ENCODE measurements at regions of chr14 and their contacts with region 1.

Region 1: GRCh38 chr14:95527387-95528002 is 7.4 kb upstream of the GLRX5 start:
- DNase-seq: no peak
- H3K4me3 Mint-ChIP-seq: no peak overlapping the region
- H3K27ac Mint-ChIP-seq: peak overlapping the region; percentile 84
- H3K4me1 Mint-ChIP-seq: peaks cover 74% of the 10 kb centered on the region
- H3K27me3 Mint-ChIP-seq: no peaks in the 10 kb centered on the region

Region 2: DNA sequence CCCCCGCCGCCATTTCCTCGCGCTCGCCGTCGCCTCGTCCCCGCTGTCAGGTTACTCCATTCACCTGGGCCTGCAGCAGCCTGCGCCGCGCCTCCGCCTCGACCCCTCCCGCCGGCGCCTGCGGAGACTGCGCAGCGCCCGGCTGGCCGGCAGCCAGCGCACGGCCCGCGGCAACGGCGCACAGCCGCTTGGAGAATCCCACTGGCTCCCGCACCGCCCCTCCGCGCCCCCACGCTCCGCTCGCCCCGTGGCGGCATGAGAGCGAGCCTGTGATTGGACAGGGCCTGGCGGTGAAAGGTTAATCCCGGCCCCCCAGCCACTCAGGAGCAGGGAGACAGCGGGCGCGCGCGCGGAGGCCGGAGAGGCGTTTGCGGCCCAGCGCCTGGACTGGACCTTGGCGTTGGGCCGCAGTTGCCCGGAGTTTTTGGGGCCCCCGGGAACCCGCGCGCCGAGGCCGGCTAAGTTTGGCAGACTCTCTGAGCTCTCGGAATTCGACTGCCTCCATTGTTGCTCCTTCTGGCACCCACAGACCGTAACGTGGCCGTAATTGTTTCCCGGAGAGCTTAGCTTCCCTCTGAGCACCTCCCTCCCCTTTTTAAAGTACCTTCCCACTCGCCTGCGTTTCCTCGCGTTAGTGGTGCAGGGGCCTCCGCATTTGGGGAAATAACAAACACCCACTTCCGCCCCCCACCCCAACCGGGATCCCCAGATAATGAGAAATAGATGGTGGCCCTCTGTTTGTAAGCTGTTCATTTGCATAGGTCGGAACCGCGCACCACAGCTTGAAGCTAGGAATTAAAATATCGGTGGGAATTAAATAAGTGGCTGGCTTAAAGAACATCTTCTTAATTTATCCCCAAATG is 369.9 kb before region 1 on chr14 and contains the start of gene DICER1:
- intact Hi-C with region 1: loop called (anchors 2 kb)
- DNase-seq: peak; percentile 90
- H3K4me3 Mint-ChIP-seq: peak within 1 kb of the TSS; percentile 91
- H3K27ac Mint-ChIP-seq: peak within 1 kb of the TSS; percentile 97
- H3K4me1 Mint-ChIP-seq: peaks cover 31% of the 10 kb centered on the region
- H3K27me3 Mint-ChIP-seq: no peaks in the 10 kb centered on the region
- total RNA-seq, gene DICER1: 64.0 and 67.1 TPM in 2 replicates

Region 3: DNA sequence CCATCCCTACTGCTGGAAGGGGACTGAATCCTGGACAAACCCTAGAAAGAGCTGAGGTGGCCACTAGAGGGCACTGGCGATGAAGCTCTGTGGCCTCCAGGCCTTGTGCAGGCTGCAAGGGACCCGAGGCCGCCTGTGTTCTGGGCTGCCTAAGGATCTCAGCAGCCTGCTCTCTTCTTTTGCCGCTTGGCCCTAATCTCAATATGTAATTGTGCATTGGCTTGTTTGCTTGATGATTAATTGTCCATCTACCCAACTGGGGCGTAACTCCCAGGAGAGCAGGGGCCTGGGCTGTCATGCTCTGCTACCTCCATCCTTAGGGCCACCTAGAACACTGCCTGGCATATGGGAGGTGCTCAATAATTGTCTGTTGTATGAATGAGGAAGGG is 84.9 kb before region 1 on chr14:
- intact Hi-C with region 1: loop called (anchors 1 kb)
- DNase-seq: peak; percentile 57
- H3K4me3 Mint-ChIP-seq: no peak overlapping the region
- H3K27ac Mint-ChIP-seq: peak overlapping the region; percentile 19
- H3K4me1 Mint-ChIP-seq: peaks cover 3% of the 10 kb centered on the region
- H3K27me3 Mint-ChIP-seq: no peaks in the 10 kb centered on the region

Region 4: GRCh38 chr14:95495538-95496025 is 31.9 kb before region 1 on chr14:
- intact Hi-C with region 1: loop called (anchors 1 kb)
- DNase-seq: no peak
- H3K4me3 Mint-ChIP-seq: peak overlapping the region; percentile 13
- H3K27ac Mint-ChIP-seq: peak overlapping the region; percentile 81
- H3K4me1 Mint-ChIP-seq: peaks cover 57% of the 10 kb centered on the region
- H3K27me3 Mint-ChIP-seq: no peaks in the 10 kb centered on the region

Region 5: GRCh38 chr14:95515596-95516552 is 11.6 kb before region 1 on chr14:
- intact Hi-C with region 1: loop called (anchors 1 kb)
- DNase-seq: peak; percentile 81
- H3K4me3 Mint-ChIP-seq: peak overlapping the region; percentile 92
- H3K27ac Mint-ChIP-seq: peak overlapping the region; percentile 89
- H3K4me1 Mint-ChIP-seq: peaks cover 62% of the 10 kb centered on the region
- H3K27me3 Mint-ChIP-seq: no peaks in the 10 kb centered on the region

Region 6: DNA sequence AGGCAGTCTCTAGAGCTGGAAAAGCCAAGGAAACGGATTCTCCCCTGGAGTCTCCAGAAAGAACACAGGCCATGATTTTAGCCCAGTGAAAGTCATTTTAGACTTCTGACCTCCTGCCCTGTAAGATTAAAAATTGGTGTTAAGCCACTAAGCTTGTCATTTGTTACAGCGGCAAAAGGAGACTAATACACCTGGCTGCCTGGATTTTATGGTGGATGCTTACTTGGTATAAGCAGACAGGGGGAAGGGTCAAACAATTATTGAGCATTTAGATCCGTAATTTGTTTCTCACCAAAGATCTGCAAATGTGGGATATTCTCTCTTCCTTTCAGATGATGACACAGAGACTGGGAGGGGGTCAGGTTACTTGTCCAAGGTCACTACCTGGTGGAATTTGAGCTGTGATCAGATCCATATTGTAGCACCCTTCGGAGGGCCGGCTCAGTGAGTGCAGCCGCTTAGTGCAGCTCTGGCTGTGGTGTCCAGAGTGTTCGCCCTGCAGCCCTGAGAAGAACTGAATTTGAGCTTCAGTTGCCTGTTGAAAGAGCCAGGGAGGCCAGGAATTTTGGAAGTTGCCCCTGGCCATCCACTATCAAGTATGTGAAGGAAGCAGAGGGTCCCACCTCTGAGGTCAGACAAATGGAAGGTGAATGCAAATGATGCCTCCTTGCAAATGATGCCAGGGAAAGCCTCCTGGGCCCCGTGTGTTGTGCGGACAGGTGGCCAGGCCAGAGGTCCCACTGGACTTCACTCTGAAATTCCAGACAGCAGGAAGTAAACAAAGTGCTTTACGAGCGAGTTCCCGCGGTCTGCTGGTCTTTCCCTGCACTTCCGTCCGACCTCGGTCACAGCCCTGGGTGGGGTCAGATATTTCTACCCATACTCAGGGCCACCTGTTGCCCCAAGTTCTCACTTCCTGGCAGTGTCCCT is 22.4 kb after region 1 on chr14:
- intact Hi-C with region 1: no loop called
- DNase-seq: no peak
- H3K4me3 Mint-ChIP-seq: no peak overlapping the region
- H3K27ac Mint-ChIP-seq: no peak overlapping the region
- H3K4me1 Mint-ChIP-seq: peaks cover 5% of the 10 kb centered on the region
- H3K27me3 Mint-ChIP-seq: no peaks in the 10 kb centered on the region